ENCODE measurements at regions of chr1 and their contacts with region 1.

Region 1: GRCh38 chr1:206803221-206803730 is 31.0 kb upstream of the IL10 start:
- DNase-seq: peak; percentile 42 to 96 (median 93)
- ATAC-seq: peak; percentile 97
- H3K4me3 ChIP-seq: no peak overlapping the region
- H3K4me3 Mint-ChIP-seq: peak overlapping the region in 9 of 10 donors; percentile 32 to 71 (median 57)
- H3K27ac ChIP-seq: peak overlapping the region; percentile 81
- H3K27ac Mint-ChIP-seq: peak overlapping the region; percentile 83 to 99 (median 95)
- H3K4me1 ChIP-seq: peaks cover 34 to 41% of the 10 kb centered on the region in 2 donors
- H3K4me1 Mint-ChIP-seq: peaks cover 29 to 78% (median 77%) of the 10 kb centered on the region in 7 donors
- H3K27me3 ChIP-seq: no peaks in the 10 kb centered on the region
- H3K27me3 Mint-ChIP-seq: peaks cover 0 to 44% (median 0%) of the 10 kb centered on the region in 5 donors

Region 2: DNA sequence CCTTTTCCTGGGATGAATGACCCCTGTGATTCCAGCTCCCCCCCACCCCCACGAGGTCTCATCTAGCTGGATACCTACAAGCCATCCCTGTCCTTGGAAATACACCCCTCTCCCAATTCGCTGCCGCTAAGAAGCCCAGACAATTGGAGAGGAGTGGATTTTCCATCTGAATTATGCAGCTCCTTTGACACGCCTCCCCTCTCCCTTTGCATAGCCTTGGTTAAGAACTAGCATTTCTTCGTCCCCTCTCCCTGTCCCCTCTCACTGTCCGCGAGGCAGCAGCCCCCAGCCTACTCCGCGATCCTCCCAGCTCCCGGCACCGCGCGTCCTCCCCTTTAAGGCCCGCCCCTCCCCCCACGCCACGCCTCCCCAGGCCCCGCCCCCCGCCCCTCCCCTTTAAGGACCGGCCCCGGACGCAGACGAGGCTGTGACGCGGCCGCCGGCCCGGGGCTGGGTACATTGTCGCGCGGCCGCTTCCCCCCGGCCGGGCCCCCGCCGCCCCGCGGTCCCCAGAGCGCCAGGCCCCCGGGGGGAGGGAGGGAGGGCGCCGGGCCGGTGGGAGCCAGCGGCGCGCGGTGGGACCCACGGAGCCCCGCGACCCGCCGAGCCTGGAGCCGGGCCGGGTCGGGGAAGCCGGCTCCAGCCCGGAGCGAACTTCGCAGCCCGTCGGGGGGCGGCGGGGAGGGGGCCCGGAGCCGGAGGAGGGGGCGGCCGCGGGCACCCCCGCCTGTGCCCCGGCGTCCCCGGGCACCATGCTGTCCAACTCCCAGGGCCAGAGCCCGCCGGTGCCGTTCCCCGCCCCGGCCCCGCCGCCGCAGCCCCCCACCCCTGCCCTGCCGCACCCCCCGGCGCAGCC is 118.6 kb before region 1 on chr1 and contains the start of gene MAPKAPK2:
- CTCF ChIA-PET with region 1: interaction called, 3 read pairs
- POLR2A ChIA-PET with region 1: no interaction called
- intact Hi-C with region 1: loop called in 1 of 2 experiments (anchors 1 kb)
- DNase-seq: peak; percentile 52 to 80 (median 71)
- ATAC-seq: peak; percentile 85
- H3K4me3 ChIP-seq: peak within 1 kb of the TSS; percentile 66
- H3K4me3 Mint-ChIP-seq: peak within 1 kb of the TSS; percentile 92 to 100 (median 96)
- H3K27ac ChIP-seq: peak within 1 kb of the TSS; percentile 90
- H3K27ac Mint-ChIP-seq: peak within 1 kb of the TSS; percentile 90 to 98 (median 95)
- H3K4me1 ChIP-seq: peaks cover 12 to 21% of the 10 kb centered on the region in 2 donors
- H3K4me1 Mint-ChIP-seq: peaks cover 23 to 49% (median 38%) of the 10 kb centered on the region in 7 donors
- H3K27me3 ChIP-seq: no peaks in the 10 kb centered on the region
- H3K27me3 Mint-ChIP-seq: peaks cover 0 to 17% (median 0%) of the 10 kb centered on the region in 5 donors
- total RNA-seq, gene MAPKAPK2: 49.6 to 123 (median 80.5) TPM

Region 3: GRCh38 chr1:206761159-206761768 is 42.0 kb before region 1 on chr1:
- CTCF ChIA-PET with region 1: interaction called, 7 read pairs
- POLR2A ChIA-PET with region 1: interaction called, 47 read pairs
- intact Hi-C with region 1: loop called (anchors 1 kb)
- DNase-seq: no peak
- ATAC-seq: no peak
- H3K4me3 ChIP-seq: no peak overlapping the region
- H3K4me3 Mint-ChIP-seq: peak overlapping the region in 1 of 10 donors; percentile 30
- H3K27ac ChIP-seq: no peak overlapping the region
- H3K27ac Mint-ChIP-seq: peak overlapping the region in 2 of 9 donors; percentile 29 to 47
- H3K4me1 ChIP-seq: peaks cover 45 to 52% of the 10 kb centered on the region in 2 donors
- H3K4me1 Mint-ChIP-seq: peaks cover 19 to 50% (median 42%) of the 10 kb centered on the region in 7 donors
- H3K27me3 ChIP-seq: no peaks in the 10 kb centered on the region
- H3K27me3 Mint-ChIP-seq: peaks cover 0 to 42% (median 0%) of the 10 kb centered on the region in 5 donors

Region 4: DNA sequence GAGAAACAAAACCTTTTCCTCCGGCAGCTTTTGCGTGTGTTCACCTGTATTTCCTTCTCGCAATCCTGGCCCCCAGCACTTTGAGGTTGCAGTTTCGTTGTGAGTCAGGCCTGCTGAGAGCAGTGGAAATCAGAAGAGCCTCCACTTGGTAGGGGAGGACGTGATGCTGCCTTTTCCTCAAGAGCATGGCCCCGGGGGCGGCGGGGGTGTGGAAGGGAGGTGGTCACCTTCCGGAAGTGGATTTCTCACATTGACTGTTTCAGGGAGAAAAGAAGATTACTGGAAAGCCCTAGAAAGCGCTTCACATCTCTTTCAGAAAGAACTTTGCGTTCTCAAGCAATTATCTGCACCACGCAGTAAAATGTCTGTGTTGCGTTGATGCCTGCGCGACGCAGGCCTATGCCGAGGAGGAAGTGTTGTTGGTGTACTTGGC is 18.8 kb before region 1 on chr1:
- CTCF ChIA-PET with region 1: interaction called, 6 read pairs
- POLR2A ChIA-PET with region 1: interaction called, 13 read pairs
- intact Hi-C with region 1: loop called (anchors 1 kb)
- DNase-seq: peak in 8 of 9 donors; percentile 34 to 90 (median 62)
- ATAC-seq: peak; percentile 87
- H3K4me3 ChIP-seq: no peak overlapping the region
- H3K4me3 Mint-ChIP-seq: peak overlapping the region in 9 of 10 donors; percentile 63 to 84 (median 70)
- H3K27ac ChIP-seq: peak overlapping the region; percentile 24
- H3K27ac Mint-ChIP-seq: peak overlapping the region; percentile 77 to 95 (median 90)
- H3K4me1 ChIP-seq: peaks cover 44 to 52% of the 10 kb centered on the region in 2 donors
- H3K4me1 Mint-ChIP-seq: peaks cover 40 to 67% (median 62%) of the 10 kb centered on the region in 7 donors
- H3K27me3 ChIP-seq: no peaks in the 10 kb centered on the region
- H3K27me3 Mint-ChIP-seq: peaks cover 0 to 42% (median 0%) of the 10 kb centered on the region in 5 donors

Region 5: GRCh38 chr1:206814716-206815341 is 11.6 kb after region 1 on chr1:
- CTCF ChIA-PET with region 1: interaction called, 5 read pairs
- POLR2A ChIA-PET with region 1: interaction called, 9 read pairs
- intact Hi-C with region 1: loop called (anchors 1 kb)
- DNase-seq: no peak
- ATAC-seq: peak; percentile 38
- H3K4me3 ChIP-seq: no peak overlapping the region
- H3K4me3 Mint-ChIP-seq: no peak overlapping the region
- H3K27ac ChIP-seq: no peak overlapping the region
- H3K27ac Mint-ChIP-seq: peak overlapping the region in 7 of 9 donors; percentile 8 to 97 (median 41)
- H3K4me1 ChIP-seq: peaks cover 0 to 14% of the 10 kb centered on the region in 2 donors
- H3K4me1 Mint-ChIP-seq: peaks cover 20 to 53% (median 44%) of the 10 kb centered on the region in 7 donors
- H3K27me3 ChIP-seq: no peaks in the 10 kb centered on the region
- H3K27me3 Mint-ChIP-seq: no peaks in the 10 kb centered on the region

Region 6: DNA sequence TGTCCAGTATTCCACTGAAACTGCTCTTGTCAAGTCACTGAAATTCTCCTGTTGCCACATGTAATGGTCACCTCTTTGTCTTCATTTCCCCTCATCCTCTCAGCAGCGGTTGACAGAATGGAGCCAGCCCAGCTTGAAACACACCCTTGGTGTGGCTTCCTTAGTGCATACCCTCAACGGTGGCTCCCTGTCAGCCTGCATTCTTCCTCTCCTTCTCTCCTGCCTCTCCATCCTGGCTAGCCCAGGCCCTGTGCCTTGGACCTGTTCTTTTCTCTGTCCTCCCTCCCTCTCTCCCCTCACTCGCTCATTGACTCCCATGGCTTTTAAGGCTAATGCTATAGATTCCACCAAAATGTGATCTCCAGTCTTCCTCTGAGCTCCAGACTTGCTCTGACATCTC is 114.8 kb after region 1 on chr1:
- CTCF ChIA-PET with region 1: interaction called, 65 read pairs
- POLR2A ChIA-PET with region 1: interaction called, 22 read pairs
- intact Hi-C with region 1: loop called in 1 of 2 experiments (anchors 5 kb)
- DNase-seq: no peak
- ATAC-seq: no peak
- H3K4me3 ChIP-seq: peak overlapping the region; percentile 76
- H3K4me3 Mint-ChIP-seq: peak overlapping the region in 1 of 10 donors; percentile 75
- H3K27ac ChIP-seq: peak overlapping the region; percentile 90
- H3K27ac Mint-ChIP-seq: peak overlapping the region in 5 of 9 donors; percentile 12 to 94 (median 91)
- H3K4me1 ChIP-seq: peaks cover 55% of the 10 kb centered on the region in 2 donors
- H3K4me1 Mint-ChIP-seq: peaks cover 54 to 80% (median 57%) of the 10 kb centered on the region in 7 donors
- H3K27me3 ChIP-seq: no peaks in the 10 kb centered on the region
- H3K27me3 Mint-ChIP-seq: no peaks in the 10 kb centered on the region